ENCODE measurements at regions of chr9 and their contacts with region 1.

Region 1: DNA sequence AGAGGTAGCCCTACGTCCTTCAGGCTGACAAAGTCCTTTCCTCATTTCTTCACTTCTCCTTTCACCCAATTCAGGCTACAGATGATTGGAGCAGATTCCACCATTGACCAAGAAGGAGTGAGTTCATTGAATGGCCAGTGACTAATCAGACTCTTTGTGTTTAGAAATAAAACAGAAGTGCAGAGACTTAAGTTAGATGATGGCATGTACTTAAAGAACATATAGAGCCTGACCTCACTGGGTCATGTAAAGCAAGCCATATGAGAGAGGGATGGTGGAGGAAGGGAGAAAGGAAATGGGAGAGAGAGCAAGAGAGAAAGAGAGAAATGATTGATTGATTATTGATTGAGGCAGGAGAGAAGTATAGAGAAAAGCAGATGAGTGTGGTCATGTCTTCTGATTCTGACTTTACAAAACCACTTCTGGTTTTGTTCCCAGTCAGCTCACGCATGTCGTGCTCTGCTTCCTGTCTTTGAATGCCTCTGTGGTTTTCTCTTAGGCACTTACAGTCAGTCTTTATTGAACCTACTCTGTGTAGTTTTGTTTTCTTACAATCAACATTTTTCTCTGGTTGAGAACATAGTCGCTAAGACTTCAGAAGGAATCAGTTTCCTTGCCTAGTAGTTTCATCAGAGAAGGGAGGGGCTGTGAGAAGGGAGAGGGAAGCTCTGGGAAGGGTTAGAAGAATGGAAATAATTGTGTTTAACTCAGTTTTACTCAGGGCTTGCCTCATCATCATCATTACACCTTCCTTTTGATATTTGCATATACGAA is 149.2 kb upstream of the KLF9 start:
- DNase-seq: peak; percentile 72
- ATAC-seq: peak; percentile 93
- H3K4me3 Mint-ChIP-seq: peak overlapping the region; percentile 40
- H3K27ac Mint-ChIP-seq: peak overlapping the region; percentile 95
- H3K4me1 Mint-ChIP-seq: peaks cover 45% of the 10 kb centered on the region
- H3K27me3 Mint-ChIP-seq: no peaks in the 10 kb centered on the region

Region 2: DNA sequence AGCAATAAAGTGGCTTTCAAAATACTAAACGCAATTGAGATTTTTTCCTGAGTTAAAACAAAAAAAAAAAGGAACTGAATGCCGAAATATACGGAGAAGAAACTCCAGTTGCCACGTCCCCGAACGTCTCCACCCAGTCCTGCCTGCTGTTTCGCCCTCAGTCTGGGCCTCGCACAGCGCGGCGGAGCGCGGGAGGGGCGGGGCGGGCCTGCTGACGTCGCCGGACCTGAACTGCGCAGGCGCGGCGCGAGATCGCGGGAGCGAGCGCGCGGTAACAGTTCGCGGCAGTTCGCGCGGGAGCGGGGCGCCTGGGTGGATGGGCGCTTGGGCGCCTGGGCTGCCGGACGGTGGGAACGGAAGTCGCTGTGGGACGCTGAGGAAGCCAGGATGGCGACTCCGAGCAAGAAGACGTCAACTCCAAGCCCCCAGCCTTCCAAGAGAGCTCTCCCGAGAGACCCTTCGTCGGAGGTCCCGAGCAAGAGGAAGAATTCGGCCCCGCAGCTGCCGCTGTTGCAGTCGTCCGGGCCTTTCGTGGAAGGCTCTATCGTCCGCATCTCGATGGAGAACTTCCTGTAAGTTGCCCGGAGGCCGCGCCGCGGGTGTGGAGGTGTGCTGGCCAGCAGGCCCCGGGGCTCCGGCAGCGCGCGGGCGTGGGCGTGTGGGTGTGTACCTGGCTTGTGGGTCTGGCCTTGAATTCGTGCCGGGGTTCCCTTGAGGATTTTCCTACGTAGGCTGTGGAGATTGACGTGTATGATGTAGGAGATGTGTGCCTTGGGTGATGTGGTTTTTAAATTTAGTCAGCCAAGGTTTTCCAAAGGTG is 304.7 kb before region 1 on chr9 and contains the start of gene SMC5:
- CTCF ChIA-PET with region 1: no interaction called
- POLR2A ChIA-PET with region 1: no interaction called
- intact Hi-C with region 1: loop called in 1 of 2 experiments (anchors 1 kb)
- DNase-seq: peak; percentile 92
- ATAC-seq: peak; percentile 83
- H3K4me3 Mint-ChIP-seq: peak within 1 kb of the TSS; percentile 89
- H3K27ac Mint-ChIP-seq: peak within 1 kb of the TSS; percentile 96
- H3K4me1 Mint-ChIP-seq: peaks cover 54% of the 10 kb centered on the region
- H3K27me3 Mint-ChIP-seq: no peaks in the 10 kb centered on the region
- total RNA-seq, gene SMC5: 39.0 to 43.0 TPM

Region 3: DNA sequence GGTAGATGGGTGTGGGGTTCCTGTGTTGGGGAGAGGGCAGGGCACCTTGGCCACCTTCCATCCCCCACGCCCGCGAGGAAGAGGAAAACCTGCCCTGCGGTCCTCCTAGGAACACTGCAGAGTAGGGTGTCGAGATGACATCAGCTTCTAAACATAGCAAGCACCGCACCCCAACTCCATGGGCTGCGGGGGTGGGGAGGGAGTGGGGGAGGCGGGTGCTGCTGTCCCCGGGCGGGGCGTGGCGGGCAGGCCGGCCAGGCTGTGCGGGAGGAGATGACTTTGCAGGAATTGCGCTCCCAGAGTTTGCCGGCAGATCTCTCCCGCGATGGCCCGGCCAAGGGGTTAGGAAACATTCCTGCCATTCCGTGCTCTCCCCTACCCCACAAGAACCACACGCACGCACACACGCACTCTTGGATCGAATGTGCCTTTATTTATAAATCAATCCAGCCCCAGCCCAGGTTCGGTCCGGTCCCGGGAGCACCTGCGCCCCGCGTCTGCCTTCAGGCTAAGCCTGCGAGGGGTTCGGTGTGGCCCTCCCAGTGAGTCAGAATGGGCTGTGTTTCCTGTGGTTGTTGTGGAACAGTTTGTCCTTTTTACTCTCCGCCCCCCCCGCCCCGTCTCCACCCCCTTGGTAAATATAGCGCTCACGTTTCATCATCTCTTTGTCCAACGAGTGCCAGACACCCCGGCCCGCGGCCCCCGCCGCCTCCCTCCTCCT is 143.9 kb before region 1 on chr9:
- CTCF ChIA-PET with region 1: interaction called, 7 read pairs
- POLR2A ChIA-PET with region 1: interaction called, 11 read pairs
- intact Hi-C with region 1: loop called (anchors 1 kb)
- DNase-seq: peak; percentile 92
- ATAC-seq: peak; percentile 47
- H3K4me3 Mint-ChIP-seq: peak overlapping the region; percentile 91
- H3K27ac Mint-ChIP-seq: peak overlapping the region; percentile 100
- H3K4me1 Mint-ChIP-seq: peaks cover 49% of the 10 kb centered on the region
- H3K27me3 Mint-ChIP-seq: no peaks in the 10 kb centered on the region

Region 4: GRCh38 chr9:70466976-70467561 is 96.5 kb before region 1 on chr9:
- CTCF ChIA-PET with region 1: no interaction called
- POLR2A ChIA-PET with region 1: no interaction called
- intact Hi-C with region 1: loop called in 1 of 2 experiments (anchors 2 kb)
- DNase-seq: peak; percentile 71
- ATAC-seq: peak; percentile 92
- H3K4me3 Mint-ChIP-seq: no peak overlapping the region
- H3K27ac Mint-ChIP-seq: peak overlapping the region; percentile 51
- H3K4me1 Mint-ChIP-seq: peaks cover 55% of the 10 kb centered on the region
- H3K27me3 Mint-ChIP-seq: no peaks in the 10 kb centered on the region

Region 5: GRCh38 chr9:70519912-70520724 is 43.5 kb before region 1 on chr9:
- CTCF ChIA-PET with region 1: interaction called, 4 read pairs
- POLR2A ChIA-PET with region 1: interaction called, 7 read pairs
- intact Hi-C with region 1: loop called (anchors 1 to 5 kb)
- DNase-seq: peak; percentile 34
- ATAC-seq: peak; percentile 94
- H3K4me3 Mint-ChIP-seq: peak overlapping the region; percentile 44
- H3K27ac Mint-ChIP-seq: peak overlapping the region; percentile 69
- H3K4me1 Mint-ChIP-seq: peaks cover 20% of the 10 kb centered on the region
- H3K27me3 Mint-ChIP-seq: no peaks in the 10 kb centered on the region

Region 6: DNA sequence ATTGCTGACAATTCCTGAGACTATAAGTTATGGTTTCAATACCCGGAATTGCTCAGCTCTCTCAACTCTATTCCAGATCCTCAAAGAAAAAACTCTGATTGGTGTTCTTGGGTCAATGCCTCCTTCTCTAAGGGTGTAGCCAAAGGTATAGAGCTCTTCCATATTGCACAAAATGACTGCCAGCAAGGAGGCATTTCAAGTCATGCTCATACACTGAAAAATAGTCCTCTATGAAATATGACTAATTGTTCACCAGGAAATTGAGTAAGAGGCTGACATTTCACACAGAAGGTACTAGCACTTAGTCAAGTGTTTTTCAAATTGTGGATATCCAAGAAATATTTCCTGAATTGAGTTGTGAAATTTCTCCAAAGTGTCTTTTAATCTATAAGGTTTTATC is 38.1 kb before region 1 on chr9:
- CTCF ChIA-PET with region 1: no interaction called
- POLR2A ChIA-PET with region 1: interaction called, 3 read pairs
- intact Hi-C with region 1: loop called (anchors 1 to 5 kb)
- DNase-seq: no peak
- ATAC-seq: peak; percentile 88
- H3K4me3 Mint-ChIP-seq: no peak overlapping the region
- H3K27ac Mint-ChIP-seq: peak overlapping the region; percentile 35
- H3K4me1 Mint-ChIP-seq: peaks cover 22% of the 10 kb centered on the region
- H3K27me3 Mint-ChIP-seq: no peaks in the 10 kb centered on the region

Region 7: GRCh38 chr9:71783120-71783530 is 1219.5 kb after region 1 on chr9:
- CTCF ChIA-PET with region 1: no interaction called
- POLR2A ChIA-PET with region 1: no interaction called
- intact Hi-C with region 1: loop called in 1 of 2 experiments (anchors 5 kb)
- DNase-seq: peak; percentile 93
- ATAC-seq: peak; percentile 97
- H3K4me3 Mint-ChIP-seq: peak overlapping the region; percentile 68
- H3K27ac Mint-ChIP-seq: peak overlapping the region; percentile 98
- H3K4me1 Mint-ChIP-seq: peaks cover 48% of the 10 kb centered on the region
- H3K27me3 Mint-ChIP-seq: no peaks in the 10 kb centered on the region

Measured in activated CD4-positive, alpha-beta T cell treated with anti-CD3 and anti-CD28 coated beads for 36 hours (primary cell).